OCI-LY7 (cell line): ENCODE measurements at regions of chr6 and their contacts with region 1.

Region 1: DNA sequence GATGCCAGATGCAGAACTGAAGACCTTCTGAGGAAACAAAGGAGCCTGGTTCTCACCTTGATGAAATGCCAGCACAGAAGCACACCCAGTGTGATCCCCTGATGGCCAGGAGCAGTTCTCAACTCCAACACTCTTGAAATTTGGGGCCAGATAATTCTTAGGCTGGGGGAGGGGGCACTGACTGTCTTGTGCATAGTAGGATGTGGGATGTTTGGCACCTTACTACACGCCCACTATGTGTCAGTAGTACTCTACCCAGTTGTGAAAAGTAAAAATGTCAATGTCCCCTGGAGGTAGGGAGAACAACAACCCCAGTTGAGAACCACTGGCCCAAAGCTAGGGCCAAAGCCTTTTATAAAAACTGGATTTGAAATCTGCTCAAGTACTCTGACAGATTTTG is 398.3 kb upstream of the ARID1B start:
- DNase-seq: peak; percentile 30
- H3K4me3 ChIP-seq: no peak overlapping the region
- H3K27ac ChIP-seq: no peak overlapping the region
- H3K4me1 ChIP-seq: no peaks in the 10 kb centered on the region
- CTCF ChIP-seq: peak; percentile 25; the same call in 1 of the 2 replicates

Region 2: DNA sequence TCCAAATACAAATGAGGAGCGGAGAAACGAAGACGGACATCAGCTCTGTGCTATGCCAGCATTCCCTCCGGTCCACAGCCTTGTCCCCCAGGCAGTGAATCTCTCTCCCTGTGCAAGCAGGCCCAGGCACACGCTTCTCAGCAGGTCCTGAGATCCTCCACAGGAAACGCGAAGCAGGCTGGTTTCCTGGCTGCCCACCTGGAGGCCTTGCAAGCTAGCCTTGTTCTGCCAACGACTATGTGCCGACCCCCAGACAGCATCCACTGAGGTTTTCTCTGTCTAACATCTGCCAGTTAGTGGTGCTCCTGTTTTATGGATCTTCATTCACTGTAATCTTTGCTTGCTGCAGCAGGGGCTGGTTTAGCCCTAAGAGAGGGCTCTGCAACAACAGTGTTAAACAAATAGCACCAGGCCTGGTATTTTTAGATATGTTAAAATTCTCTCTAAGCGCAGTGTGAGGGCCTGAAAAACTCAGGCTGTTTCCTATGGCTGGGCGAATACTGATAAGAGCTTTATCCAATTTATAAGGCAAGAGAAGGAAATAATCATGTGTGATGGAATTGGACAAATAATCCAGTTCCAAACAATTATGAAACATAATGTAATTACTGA is 12.3 kb after region 1 on chr6:
- CTCF ChIA-PET with region 1: interaction called, 3 read pairs
- POLR2A ChIA-PET with region 1: interaction called, 20 read pairs
- intact Hi-C with region 1: no loop called
- DNase-seq: peak; percentile 77
- H3K4me3 ChIP-seq: peak overlapping the region; percentile 36
- H3K27ac ChIP-seq: peak overlapping the region; percentile 99
- H3K4me1 ChIP-seq: peaks cover 64% of the 10 kb centered on the region
- CTCF ChIP-seq: no peak

Region 3: DNA sequence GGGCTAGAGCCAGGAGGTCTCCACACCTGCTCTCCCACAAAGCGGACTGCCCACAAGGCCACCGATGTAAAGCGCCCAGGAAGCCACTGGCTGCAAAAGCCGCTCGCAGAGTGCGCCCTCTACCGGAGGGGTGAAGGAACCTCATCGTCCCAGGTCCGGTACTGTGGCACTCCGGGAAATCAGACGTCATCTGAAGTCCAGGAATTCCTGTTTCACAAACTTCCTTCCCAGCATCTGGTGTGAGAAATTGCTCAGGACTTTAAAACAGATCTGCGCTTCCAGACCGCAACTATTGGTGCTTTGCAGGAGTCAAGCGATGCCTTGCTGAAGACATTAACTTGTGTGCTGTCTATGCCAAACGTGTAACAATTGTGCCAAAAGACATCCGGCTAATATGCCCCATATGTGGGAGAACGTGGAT is 283.2 kb after region 1 on chr6:
- CTCF ChIA-PET with region 1: no interaction called
- POLR2A ChIA-PET with region 1: no interaction called
- intact Hi-C with region 1: no loop called
- DNase-seq: peak; percentile 37
- H3K4me3 ChIP-seq: no peak overlapping the region
- H3K27ac ChIP-seq: no peak overlapping the region
- H3K4me1 ChIP-seq: peaks cover 14% of the 10 kb centered on the region
- CTCF ChIP-seq: peak; percentile 84